ENCODE measurements at regions of chr7 and their contacts with region 1.

Region 1: GRCh38 chr7:149005241-149006050 is 22.9 kb downstream of the PDIA4 start:
- DNase-seq: peak; percentile 81
- CTCF ChIP-seq: peak; percentile 77

Region 2: GRCh38 chr7:148944935-148945934 is 60.2 kb before region 1 on chr7:
- CTCF ChIA-PET with region 1: no interaction called
- POLR2A ChIA-PET with region 1: no interaction called
- DNase-seq: no peak
- CTCF ChIP-seq: no peak

Region 3: DNA sequence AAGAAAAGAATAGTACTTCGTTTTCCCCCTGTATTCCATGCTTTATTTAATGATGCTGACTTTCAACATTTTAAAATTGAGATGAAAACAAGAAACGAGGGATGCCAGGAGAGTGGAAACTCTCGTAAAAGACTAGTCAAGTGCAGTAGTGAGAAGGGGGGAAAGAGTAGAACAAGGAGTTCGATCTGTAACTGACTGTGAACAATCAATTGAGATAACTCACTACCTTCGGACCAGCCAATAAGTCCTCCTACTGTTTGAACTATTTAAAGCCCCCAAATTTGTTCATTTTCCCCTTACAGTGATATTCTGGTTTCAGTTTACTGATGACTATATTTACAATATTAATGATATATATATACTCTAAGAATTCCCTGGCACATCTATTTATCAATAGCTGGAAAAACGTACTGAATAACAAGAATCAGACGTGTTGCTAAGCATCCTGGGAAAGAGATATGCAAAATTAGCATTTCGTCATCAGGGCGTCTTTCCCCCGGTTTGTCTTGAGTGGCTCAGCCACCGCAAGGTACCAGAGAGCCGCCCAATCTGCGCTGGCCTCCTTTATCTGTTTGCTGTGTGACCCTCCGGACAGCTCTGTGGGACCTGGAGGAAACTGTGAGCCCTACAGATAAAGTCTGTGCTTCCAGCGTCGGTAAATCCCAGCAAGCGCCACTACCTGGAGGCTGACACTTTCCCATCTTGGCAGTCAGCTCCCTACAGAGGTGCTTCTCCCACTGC is 18.3 kb before region 1 on chr7:
- CTCF ChIA-PET with region 1: interaction called, 17 read pairs
- POLR2A ChIA-PET with region 1: no interaction called
- DNase-seq: peak; percentile 91
- CTCF ChIP-seq: no peak

Region 4: DNA sequence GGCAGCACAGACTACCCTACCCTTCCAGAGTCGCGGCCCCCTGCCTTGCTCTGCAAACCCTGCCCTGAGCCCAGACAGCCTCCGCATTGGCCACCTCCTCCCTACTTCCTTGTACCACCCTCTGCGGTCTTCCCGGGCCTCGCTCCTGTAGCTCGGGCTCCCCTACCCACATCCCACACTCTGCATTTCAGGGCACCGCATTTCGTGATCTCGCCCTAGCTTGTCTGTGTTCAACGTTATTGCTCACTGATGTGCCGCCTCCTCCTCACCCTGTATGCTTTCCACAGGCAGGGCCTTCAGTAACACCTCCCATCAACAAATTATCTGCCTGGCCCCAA is 16.2 kb after region 1 on chr7:
- CTCF ChIA-PET with region 1: interaction called, 51 read pairs
- POLR2A ChIA-PET with region 1: no interaction called
- DNase-seq: no peak
- CTCF ChIP-seq: no peak

Region 5: DNA sequence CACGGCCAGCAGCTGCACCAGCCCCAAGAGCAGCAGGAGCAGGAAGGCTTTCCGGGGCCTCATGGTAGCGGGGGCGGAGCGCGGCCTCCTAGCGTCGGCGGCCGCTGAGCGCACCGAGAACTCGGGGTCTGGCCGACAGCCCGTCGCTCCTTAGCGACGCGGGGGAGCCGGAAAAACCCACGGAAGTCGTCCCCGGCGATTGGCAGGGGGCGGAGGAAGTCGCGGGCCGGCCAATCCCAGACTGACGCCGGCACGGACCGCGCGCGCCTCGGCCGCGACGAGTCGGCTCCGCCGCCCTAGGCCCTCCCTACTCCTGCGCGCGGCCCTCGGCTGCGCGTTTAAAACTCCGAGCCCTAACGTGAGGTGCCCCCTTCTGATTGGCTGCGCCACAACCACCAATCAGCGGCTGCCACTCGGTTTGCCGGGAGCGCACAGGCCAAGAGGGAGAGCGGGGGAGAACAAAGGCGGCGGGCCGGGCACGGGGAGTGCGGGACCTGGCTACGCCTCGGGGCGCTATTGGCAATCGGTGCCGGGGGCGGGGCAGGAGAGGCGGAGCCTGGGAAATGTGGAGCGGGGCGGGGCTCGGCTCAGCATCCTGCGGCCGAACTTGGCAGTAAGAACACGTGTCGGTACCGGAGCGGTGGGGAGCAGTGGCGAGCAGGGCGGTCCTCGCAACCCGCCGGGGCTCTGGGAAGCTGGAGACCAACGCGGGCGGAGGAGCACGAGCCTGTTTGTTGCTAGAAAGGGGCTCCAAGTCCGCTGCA is 23.1 kb after region 1 on chr7 and contains the start of gene PDIA4:
- CTCF ChIA-PET with region 1: interaction called, 51 read pairs
- POLR2A ChIA-PET with region 1: no interaction called
- DNase-seq: peak; percentile 98
- CTCF ChIP-seq: no peak

Region 6: DNA sequence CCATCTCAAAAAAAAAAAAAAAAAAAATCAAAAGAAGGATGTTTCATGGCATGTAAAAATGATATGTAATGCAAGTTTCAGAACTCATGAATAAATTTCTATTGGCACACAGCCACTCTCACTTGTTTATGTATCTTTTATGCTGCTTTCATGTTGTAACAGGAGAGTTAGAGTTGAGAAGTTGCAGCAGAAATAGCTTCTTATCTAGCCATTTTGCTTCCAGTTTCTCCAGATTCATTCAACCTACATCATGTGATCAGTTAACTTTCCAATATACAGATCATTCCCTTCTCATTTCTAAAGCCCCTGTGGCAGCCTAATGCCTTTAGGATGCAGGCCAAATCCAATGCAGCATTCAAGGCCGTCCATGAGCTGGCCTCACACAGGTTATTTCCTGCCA is 54.7 kb after region 1 on chr7:
- CTCF ChIA-PET with region 1: interaction called, 59 read pairs
- POLR2A ChIA-PET with region 1: no interaction called
- DNase-seq: no peak
- CTCF ChIP-seq: no peak

Region 7: DNA sequence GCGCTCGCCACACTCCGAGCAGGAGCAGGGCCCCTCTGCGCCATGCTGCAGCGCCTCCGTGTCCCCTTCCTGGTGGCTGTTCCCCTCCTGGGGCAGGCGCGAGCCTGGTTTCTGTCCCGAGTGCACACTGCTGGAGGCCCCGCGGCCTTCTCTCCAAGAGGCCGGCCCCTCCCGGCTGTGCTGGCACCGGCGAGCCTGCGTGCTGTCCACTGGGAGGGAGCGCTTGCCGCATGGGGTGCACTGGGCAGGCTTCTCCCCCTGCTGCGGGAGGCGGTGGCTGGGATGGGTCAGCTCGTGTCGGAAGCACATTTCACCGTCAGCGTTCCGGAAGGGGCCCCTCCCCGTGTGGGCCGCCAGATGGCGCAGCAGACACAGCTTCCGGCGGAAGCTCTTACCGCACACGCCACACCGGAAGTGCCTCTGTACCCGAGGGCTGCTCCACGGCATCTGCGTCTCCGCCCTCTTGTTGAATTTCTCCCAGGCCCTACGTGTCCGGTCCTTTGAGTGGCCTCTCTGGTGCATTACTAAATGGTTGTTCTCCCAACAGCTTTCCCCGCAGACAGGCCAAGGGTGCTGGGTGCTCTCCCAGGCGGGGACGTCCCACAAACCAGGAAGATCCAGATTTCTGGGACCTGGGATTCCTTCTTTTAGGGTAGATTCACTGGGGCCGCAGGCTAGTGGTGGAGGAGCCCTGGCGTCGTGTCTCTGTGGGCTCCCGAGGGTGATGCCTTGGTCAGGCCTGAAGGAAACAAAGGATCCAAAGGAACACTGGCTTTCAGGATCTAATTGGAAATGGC is 66.4 kb after region 1 on chr7:
- CTCF ChIA-PET with region 1: interaction called, 59 read pairs
- POLR2A ChIA-PET with region 1: interaction called, 3 read pairs
- DNase-seq: peak; percentile 54
- CTCF ChIP-seq: no peak

Region 8: DNA sequence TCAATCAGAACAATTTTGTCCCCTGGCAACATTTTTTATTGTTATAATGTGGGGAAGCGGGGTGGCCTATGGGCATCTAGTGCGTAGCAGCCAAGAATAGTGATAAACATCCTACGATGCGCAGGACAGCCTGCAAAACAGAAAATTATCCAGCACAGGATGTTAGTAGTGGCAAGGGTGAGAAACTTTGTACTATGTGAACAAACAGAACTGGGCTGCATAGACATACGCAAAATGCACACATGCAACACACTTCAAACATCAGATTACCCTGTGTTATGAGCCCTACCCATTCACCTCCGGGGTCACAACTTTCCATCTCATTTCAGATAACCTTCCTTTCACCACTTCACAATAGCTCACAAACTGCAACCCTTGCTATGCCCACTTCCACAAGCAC is 81.9 kb after region 1 on chr7:
- CTCF ChIA-PET with region 1: interaction called, 10 read pairs
- POLR2A ChIA-PET with region 1: no interaction called
- DNase-seq: no peak
- CTCF ChIP-seq: no peak

Measured in GM10248 (cell line).